HEK293T (cell line): ENCODE measurements at regions of chr10 and their contacts with region 1.

Region 1: DNA sequence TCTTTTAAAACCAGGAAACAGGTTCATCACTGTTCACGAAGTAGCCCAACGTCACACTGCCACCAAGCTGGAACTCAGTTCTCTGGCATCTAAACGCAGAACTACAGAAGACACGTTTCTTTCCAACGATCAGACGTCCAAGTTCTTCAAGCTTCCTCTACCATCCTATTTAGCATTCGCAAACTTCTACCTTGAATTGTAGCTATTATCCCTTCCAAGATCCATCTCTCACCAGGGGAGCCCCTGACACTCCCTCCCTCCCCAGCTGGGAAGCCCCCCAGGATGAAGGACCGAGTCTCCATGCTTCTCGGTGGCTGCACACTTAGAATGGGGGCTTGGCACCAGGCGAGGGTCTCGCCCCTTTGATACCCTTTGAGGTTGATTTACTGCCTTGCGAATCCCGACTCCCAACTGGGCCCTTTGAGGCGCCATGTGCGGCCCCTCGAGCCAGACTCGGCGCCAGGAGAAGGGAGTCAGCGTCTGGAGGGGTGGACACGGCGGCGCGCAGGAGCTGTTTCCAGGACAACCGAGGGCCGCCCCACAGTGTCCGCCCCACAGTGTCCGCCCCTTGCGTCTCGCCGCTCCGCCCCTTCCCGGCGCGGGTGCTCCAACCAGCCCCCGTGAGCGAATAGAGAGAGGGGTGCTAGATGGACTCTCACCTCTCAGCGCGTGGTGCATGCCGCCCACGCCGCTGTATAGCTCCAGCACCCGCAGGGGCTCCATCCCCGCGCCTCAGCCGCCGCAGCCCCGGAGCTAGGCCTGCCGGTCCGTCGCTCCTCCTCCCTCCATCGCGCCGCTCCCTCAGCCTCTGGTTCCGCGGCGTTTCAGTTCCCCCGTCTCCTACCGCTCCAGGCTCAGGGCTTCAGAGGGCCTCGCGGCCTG is at the start of gene TRDMT1:
- DNase-seq: peak; percentile 82

Region 2: GRCh38 chr10:17213646-17214349 is 12.6 kb after region 1 on chr10:
- CTCF ChIA-PET with region 1: no interaction called
- POLR2A ChIA-PET with region 1: interaction called, 22 read pairs
- DNase-seq: no peak

Region 3: GRCh38 chr10:17220652-17221100 is 19.5 kb after region 1 on chr10:
- CTCF ChIA-PET with region 1: no interaction called
- POLR2A ChIA-PET with region 1: interaction called, 104 read pairs
- DNase-seq: peak; percentile 26